GM10248 (cell line): ENCODE measurements at regions of chr3 and their contacts with region 1.

Region 1: DNA sequence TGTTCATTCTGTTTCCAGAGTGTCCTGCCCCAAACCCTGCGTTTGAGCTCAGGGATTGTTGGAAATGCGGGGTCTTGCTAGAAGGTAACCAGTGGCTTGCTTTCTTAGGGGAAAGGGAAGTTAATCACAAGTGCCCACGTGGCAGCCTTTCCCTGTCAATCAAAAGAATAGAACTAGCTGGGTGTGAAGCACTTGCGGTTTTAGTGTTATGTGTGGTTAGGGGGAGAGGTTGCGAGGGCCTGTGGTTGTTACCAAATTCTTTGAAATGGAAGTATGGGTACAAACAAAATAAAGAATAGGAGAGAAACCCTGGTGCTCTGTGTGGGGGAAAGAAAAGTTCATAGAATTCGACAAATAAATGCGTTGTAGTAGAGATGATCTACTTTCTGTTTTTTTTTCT is 67.6 kb downstream of the FNDC3B start:
- DNase-seq: peak; percentile 52
- CTCF ChIP-seq: no peak

Region 2: DNA sequence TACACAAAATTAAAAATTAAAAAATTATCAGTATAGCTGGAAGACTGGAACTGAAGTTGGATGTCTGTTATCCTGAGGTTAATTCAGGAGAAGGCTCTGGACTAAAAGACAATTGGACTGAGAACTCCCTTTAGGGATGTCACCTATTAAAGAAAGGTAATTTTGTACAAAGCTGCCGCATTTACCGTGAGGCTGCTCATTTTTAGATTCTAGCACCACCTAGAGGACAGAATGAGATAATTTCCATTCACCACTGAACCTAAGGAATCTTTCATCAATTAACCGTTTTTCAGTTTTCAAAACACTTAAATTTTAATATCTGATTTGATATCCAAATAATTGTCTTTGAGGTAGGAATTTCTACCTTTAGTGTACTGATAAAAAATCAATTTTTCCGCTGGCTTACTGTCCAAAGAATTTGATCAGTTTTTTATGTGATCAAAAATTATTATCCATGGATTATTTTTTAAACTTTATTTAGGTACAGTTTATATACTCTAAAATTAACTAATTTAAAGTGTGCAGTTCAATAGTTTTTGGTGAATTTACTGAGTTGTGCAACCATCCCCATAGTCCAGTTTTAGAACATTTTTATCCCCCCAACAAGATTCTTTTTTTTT is 540.1 kb before region 1 on chr3:
- CTCF ChIA-PET with region 1: no interaction called
- POLR2A ChIA-PET with region 1: no interaction called
- DNase-seq: peak; percentile 56
- CTCF ChIP-seq: peak; percentile 63

Region 3: GRCh38 chr3:171860830-171861535 is 246.0 kb before region 1 on chr3:
- CTCF ChIA-PET with region 1: no interaction called
- POLR2A ChIA-PET with region 1: no interaction called
- DNase-seq: no peak
- CTCF ChIP-seq: no peak

Region 4: GRCh38 chr3:172039436-172040077 is 67.4 kb before region 1 on chr3 and contains the start of gene FNDC3B:
- CTCF ChIA-PET with region 1: interaction called, 6 read pairs
- POLR2A ChIA-PET with region 1: interaction called, 11 read pairs
- DNase-seq: peak; percentile 88
- CTCF ChIP-seq: no peak

Region 5: DNA sequence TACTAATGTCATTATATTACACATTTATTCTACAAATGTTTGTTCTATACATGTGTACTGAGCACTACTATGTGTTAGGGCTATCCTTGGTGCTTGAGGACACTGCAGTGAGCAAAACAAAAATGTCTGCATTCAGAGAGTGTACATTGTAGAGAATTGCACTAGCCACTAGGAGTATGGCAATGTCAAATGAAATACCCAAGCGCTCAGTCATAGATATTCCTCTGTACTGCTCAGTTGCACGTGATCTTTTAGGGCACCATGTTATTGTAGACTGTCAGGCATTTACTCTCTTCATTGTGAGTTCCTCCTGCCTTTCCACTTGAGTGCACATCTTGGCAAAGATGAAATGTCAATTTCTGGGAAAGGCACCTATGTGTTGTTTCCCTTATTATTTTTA is 30.8 kb before region 1 on chr3:
- CTCF ChIA-PET with region 1: no interaction called
- POLR2A ChIA-PET with region 1: no interaction called
- DNase-seq: no peak
- CTCF ChIP-seq: no peak

Region 6: DNA sequence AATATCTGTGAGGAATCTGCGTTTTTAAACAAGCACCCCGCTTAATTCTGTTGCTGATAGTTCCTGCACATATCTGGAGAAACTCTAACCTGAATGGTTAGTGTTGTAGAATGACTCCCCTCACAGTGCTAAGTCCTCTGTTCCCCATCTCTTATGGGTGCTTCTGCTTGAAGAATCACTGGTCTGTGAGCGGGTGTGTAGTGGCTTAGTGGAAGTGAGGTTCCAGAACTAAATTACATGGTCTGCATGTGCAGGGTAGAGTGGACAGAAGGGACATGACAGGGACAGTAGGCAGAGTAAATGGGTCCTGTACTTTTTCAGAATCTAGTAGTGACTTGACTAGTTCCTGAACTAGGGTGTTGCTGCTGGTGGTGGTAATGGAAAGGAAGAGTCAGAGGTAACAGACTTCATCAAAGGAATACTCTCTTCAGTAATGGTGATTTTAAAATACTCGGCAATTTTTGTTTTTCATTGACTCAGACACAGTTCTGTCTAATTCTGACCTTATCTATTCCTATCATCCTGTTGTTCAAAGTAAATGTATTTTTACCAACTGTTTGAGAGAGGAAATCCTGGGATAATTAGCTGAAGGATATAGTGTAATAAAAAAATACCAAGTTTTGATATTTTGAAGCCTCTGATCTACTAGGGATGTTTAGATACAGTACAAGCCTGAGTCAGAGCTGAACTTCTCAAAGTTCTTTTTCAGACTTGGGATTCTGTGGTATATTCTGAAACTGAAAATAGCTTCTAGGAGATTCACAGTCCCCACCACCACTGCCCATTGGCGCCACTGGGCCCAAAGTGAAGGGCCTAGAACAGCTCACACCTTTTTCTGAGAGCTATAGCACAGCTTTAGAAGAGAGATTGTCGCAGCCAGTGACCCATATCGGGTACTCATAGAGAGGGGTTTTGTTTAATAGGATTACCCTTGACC is 12.1 kb before region 1 on chr3:
- CTCF ChIA-PET with region 1: interaction called, 30 read pairs
- POLR2A ChIA-PET with region 1: interaction called, 4 read pairs
- DNase-seq: peak; percentile 40
- CTCF ChIP-seq: peak; percentile 14

Region 7: DNA sequence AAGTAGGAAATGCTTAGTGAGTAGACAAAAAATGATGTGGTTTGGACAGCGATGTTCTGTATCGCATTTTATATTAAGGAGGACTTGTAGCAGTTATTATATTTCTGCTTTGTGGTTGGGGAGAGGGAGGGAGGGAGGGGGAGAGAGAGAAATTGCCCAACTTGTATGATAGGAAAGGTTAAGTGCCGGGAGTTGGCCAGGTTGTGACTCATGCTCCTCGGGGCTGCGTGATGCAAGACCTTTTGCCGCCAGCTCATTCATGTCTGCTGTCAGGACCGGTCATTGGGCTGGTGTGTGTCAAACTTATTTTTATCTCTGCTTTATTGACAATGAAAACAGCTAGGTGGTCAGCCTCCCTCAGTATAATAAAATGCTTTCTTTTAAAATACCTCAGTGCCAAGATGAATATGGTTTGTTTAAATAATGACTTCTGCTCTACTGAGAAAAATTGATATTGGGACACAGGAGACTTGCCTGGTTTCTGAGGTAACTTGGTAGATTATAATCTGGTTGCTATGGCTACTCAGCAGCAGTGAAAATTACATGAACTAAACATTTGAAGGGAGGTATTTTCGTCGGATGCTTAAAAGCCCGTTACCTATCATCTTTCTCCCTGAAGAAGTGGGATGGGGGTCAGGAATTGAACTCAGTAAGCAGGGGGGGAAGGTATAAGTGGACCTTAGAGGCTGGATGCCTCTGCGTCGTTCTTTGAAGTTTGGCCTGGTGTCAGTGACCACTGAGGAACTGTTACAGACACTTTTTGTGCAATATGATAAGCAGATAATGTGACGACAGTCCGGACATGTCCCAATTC is 23.1 kb after region 1 on chr3:
- CTCF ChIA-PET with region 1: interaction called, 13 read pairs
- POLR2A ChIA-PET with region 1: no interaction called
- DNase-seq: no peak
- CTCF ChIP-seq: no peak